Ascending aorta (tissue), 2 donors: ENCODE measurements at regions of chr17 and their contacts with region 1.

Region 1: DNA sequence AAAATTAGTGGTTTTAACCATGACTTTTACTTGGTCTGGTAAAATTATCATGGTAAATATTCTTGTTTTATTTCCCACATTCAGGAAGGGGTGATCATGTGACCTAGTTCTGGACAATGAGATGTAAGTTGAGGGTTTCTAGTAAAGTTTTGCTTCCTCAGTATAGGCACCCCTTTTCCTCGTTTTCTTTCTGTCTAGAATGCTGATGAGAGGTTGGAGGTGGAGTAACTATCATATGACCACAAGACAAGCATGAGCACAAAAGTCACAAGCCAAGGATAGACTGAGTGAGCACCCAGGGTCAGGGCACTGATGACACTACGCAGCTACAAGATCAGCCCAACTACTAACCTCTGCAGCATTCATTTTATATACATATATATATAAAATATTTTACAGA is 53.9 kb downstream of the MYO1D start:
- DNase-seq: no peak
- H3K4me3 ChIP-seq: peak overlapping the region; percentile 51 to 64
- H3K27ac ChIP-seq: peak overlapping the region; percentile 77 to 84
- H3K4me1 ChIP-seq: peaks cover 0 to 55% of the 10 kb centered on the region in 2 donors
- H3K27me3 ChIP-seq: no peaks in the 10 kb centered on the region
- CTCF ChIP-seq: no peak

Region 2: DNA sequence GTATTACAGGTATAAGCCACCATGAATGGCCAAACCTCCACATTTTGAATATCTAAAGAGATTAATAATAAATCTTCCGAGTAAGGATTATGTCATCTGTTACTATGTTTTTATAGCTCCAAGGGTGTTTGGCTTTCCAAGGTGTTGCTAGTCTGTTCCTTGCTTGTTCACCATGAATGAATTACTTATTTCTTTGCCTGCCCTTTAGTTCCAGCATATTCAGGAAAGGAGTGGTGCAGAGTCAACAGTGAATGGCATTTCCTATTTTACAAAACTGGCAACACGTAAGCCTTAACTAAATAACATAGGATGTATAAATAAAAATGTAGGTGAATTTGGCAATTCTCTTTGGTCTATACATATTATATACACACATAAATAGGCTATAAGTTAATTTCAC is 16.4 kb before region 1 on chr17:
- intact Hi-C with region 1: loop called (anchors 2 kb)
- DNase-seq: no peak
- H3K4me3 ChIP-seq: no peak overlapping the region
- H3K27ac ChIP-seq: peak overlapping the region in 1 of 2 donors; percentile 26
- H3K4me1 ChIP-seq: peaks cover 5 to 39% of the 10 kb centered on the region in 2 donors
- H3K27me3 ChIP-seq: no peaks in the 10 kb centered on the region
- CTCF ChIP-seq: no peak